GM12878 (cell line): ENCODE measurements at regions of chr12 and their contacts with region 1.

Region 1: DNA sequence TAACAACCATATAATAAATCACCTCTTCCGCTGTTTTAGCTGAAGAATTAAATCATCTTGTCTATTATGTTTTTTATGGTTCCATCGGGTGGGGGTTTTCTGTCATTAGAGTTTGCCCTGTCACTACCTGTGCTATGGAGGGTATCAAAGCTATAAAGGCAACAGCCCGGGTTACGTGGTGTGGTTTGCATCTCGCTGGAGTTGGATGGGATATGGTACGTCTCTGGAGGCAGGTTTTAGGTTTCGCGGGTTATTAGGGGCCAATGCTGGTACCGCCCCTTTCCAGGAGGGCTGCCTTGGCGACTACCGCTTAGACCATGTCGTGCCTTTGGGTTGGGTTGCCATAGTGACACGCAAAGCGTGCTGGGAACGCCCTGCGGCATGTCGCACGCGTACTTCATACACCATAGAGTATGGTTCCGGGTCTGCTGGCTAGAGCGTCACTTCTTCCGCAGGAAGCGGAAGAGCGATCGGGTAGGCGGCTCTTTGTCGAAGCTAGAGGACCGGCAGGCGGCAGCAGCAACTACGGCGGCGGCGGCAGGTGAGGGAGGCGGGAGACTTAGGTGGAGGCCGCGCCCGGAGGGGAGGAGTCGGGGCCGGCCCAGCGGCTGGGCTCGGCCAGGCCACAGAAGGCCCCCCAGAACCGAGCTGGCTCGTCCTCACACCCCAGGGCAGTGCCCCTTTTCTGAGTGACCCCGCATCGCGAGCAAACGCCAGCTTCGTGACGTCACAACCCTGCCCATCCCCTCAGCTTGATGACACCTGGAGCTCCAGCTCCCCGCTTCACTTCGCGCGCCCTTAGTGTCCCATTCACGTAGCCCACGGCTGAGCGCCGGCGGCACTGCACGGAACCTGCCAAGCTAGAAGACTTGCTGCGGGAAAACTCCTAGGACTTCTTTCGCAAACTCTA is at the start of gene ZC3H10:
- DNase-seq: peak; percentile 99
- ATAC-seq: peak; percentile 86
- H3K4me3 ChIP-seq: peak within 1 kb of the TSS; percentile 90
- H3K27ac ChIP-seq: peak within 1 kb of the TSS; percentile 79
- H3K4me1 ChIP-seq: peaks cover 15% of the 10 kb centered on the region
- H3K27me3 ChIP-seq: no peaks in the 10 kb centered on the region
- CTCF ChIP-seq: peak; percentile 40 to 69 (median 48)
- EP300 ChIP-seq: no peak
- POLR2A ChIP-seq: peak; percentile 99
- RAD21 ChIP-seq: no peak
- polyA plus RNA-seq, gene ZC3H10: 0.56 to 0.75 TPM

Region 2: GRCh38 chr12:55280991-55281390 is 837.0 kb before region 1 on chr12:
- CTCF ChIA-PET with region 1: no interaction called
- POLR2A ChIA-PET with region 1: no interaction called
- RAD21 ChIA-PET with region 1: no interaction called
- SMC1A ChIA-PET with region 1: no interaction called
- in situ Hi-C with region 1: no loop called
- intact Hi-C with region 1: no loop called
- DNase-seq: no peak
- ATAC-seq: no peak
- H3K4me3 ChIP-seq: no peak overlapping the region
- H3K27ac ChIP-seq: no peak overlapping the region
- H3K4me1 ChIP-seq: no peaks in the 10 kb centered on the region
- H3K27me3 ChIP-seq: no peaks in the 10 kb centered on the region
- CTCF ChIP-seq: no peak
- EP300 ChIP-seq: no peak
- POLR2A ChIP-seq: no peak
- RAD21 ChIP-seq: no peak

Region 3: DNA sequence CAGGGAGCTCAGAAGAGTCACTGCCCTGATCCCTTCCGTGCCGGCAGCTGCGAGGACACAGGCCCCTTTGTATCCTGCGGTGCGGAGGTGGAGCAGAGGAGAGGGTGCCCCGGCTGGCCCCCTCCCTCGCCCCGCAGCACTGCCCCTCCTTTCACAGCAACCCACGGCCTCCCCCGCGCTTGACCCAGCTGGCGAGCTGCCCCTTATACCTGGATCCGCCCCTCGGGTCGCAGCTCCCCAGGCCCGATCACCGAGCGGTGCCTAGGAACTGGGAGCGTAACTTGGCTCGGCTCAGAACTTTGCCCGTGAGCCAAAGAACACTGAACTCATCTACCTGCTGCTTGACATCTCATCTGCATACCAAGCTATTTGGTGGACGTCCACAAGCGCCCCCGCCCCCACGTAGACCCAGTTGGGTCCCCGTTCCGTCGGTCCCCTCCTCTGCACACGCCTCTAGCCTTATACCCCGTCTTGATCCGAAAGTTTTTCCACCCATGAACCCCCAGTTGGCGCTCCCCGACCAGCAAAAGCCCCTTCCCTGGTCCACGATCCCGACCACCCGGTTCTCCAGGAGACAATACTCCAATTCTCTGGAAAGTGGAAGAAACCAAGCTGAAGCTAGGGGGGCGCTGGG is 287.9 kb before region 1 on chr12:
- CTCF ChIA-PET with region 1: no interaction called
- POLR2A ChIA-PET with region 1: interaction called, 5 read pairs
- RAD21 ChIA-PET with region 1: interaction called, 3 read pairs
- SMC1A ChIA-PET with region 1: no interaction called
- in situ Hi-C with region 1: no loop called
- intact Hi-C with region 1: loop called (anchors 5 kb)
- DNase-seq: no peak
- ATAC-seq: peak; percentile 25
- H3K4me3 ChIP-seq: peak overlapping the region; percentile 96
- H3K27ac ChIP-seq: peak overlapping the region; percentile 76
- H3K4me1 ChIP-seq: peaks cover 21% of the 10 kb centered on the region; the same call in 1 of the 2 replicates
- H3K27me3 ChIP-seq: no peaks in the 10 kb centered on the region
- CTCF ChIP-seq: no peak
- EP300 ChIP-seq: no peak
- POLR2A ChIP-seq: 0 out of 2 replicates have a peak, but pooled peaks have one; percentile 20
- RAD21 ChIP-seq: 0 out of 2 replicates have a peak, but pooled peaks have one; percentile 13

Region 4: DNA sequence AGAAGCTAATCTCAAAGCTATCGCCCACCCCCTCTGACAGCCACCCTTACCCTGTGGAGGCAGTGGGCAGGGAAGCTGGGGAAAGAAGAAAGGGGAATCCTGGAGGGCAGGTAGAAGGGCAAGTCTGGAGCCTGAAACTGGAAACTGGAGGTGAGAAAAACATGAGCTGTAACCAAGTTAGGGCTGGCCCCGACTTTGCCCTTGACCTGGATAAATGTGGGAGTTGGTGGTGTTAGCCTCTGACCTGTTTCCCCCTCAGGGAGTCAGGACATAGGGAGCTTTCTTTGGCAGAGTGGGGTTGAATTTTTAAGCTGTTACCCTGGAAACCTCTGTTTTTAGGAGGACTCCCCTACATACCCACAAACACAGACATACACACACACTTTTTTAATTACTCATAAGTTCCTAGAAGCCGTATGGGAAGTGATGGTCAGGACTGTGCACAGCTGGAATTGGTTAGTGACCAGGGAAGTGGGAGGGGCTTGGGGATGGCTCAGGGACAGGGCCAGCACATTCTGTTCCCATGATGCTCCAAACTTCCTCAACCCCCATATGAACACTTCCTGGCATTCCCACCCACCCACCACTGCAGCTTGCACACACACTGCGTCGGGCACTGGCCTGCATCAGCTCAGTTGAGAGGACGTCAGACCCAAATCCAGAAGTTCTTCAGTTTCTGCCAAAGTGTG is 270.3 kb before region 1 on chr12:
- CTCF ChIA-PET with region 1: no interaction called
- POLR2A ChIA-PET with region 1: no interaction called
- RAD21 ChIA-PET with region 1: no interaction called
- SMC1A ChIA-PET with region 1: no interaction called
- in situ Hi-C with region 1: no loop called
- intact Hi-C with region 1: no loop called
- DNase-seq: no peak
- ATAC-seq: peak; percentile 36
- H3K4me3 ChIP-seq: no peak overlapping the region
- H3K27ac ChIP-seq: no peak overlapping the region
- H3K4me1 ChIP-seq: no peaks in the 10 kb centered on the region; the same call in 1 of the 2 replicates
- H3K27me3 ChIP-seq: peaks cover 0 to 1% of the 10 kb centered on the region in 2 experiments; a peak in 3 of 4 replicates
- CTCF ChIP-seq: no peak
- EP300 ChIP-seq: no peak
- POLR2A ChIP-seq: no peak
- RAD21 ChIP-seq: no peak

Region 5: DNA sequence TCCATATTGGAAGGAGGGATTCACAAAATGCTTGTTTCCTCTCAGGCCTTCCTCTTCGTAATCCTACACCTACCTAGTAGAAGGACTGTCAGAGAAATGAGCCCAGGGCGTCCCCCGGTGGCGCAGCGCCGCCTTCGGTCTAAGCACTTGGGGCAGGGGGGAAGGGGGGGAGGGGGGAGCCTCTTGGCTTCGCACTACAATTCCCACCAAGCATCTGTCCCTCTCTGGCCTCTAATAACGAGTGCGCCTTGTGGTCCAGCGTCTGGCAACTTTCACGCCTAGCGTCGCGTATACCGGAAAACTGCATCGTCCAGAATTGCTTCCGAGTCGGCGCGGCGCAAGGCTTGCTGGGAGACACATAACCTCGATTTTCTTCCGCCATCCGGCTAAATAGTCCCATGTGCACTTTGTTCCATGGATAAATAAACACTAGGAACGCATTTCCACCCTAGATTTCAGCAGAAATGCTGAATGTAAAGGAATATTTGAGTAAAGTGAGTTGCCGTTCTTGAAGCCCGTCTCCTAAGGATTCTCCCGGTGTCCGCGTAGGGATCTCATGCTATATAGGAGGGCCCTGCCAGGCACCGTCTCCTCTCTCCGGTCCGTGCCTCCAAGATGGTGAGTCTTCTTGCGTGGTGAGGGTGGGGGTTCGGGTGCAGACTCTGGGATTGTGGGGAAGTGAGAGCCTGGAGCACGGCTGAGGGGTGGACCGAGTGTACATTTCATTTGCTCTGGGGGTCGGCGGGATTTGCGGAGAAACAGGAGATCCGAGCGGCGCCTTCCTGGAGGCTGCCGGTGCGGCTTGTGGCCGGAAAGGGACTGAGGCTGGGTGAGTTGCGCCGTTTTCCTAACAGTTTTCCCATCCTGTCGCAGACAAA is 76.2 kb before region 1 on chr12 and contains the start of gene RPS26:
- CTCF ChIA-PET with region 1: interaction called, 8 read pairs
- POLR2A ChIA-PET with region 1: interaction called, 4 read pairs
- RAD21 ChIA-PET with region 1: interaction called, 11 read pairs
- SMC1A ChIA-PET with region 1: interaction called, 3 read pairs
- in situ Hi-C with region 1: no loop called
- intact Hi-C with region 1: loop called (anchors 2 kb)
- DNase-seq: peak; percentile 98
- ATAC-seq: peak; percentile 96
- H3K4me3 ChIP-seq: peak within 1 kb of the TSS; percentile 98
- H3K27ac ChIP-seq: peak within 1 kb of the TSS; percentile 98
- H3K4me1 ChIP-seq: peaks cover 13% of the 10 kb centered on the region
- H3K27me3 ChIP-seq: no peaks in the 10 kb centered on the region
- CTCF ChIP-seq: peak; percentile 46 to 64 (median 61)
- EP300 ChIP-seq: peak in 1 of 2 experiments; percentile 60; a peak in 2 of 4 replicates
- POLR2A ChIP-seq: peak; percentile 100
- RAD21 ChIP-seq: peak; percentile 85
- polyA plus RNA-seq, gene RPS26: 2,920 to 3,147 TPM

Region 6: DNA sequence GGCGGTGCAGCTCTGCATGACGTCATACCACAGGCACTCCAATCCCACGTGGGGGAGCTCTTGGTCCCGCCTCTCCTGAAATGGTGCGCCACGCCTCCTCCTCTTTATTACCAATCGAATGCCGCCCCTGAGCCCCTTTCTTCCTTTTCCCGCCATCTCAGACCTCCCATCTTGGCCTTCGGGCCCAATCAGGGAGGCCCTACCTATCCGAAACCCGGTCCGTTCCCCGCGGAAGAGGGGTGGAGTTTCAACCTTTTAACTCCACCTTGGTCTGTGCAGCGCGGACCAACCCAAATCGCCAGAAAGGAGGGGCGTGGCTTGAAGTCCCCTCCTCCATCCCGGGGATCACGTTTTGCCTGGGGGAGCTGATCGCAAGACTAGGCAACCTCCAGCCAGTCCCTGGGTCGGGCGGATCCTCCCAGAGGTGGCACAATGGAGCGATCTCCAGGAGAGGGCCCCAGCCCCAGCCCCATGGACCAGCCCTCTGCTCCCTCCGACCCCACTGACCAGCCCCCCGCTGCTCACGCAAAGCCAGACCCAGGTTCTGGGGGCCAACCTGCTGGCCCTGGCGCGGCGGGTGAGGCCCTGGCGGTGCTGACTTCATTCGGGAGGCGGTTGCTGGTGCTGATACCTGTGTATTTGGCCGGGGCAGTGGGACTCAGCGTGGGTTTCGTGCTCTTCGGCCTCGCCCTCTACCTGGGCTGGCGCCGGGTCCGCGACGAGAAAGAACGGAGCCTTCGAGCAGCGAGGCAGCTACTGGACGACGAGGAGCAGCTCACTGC is 10.0 kb after region 1 on chr12 and contains the start of gene ESYT1:
- CTCF ChIA-PET with region 1: interaction called, 33 read pairs
- POLR2A ChIA-PET with region 1: interaction called, 56 read pairs
- RAD21 ChIA-PET with region 1: interaction called, 17 read pairs
- SMC1A ChIA-PET with region 1: interaction called, 16 read pairs
- in situ Hi-C with region 1: no loop called
- intact Hi-C with region 1: loop called (anchors 1 kb)
- DNase-seq: peak; percentile 98
- ATAC-seq: peak; percentile 93
- H3K4me3 ChIP-seq: peak within 1 kb of the TSS; percentile 93
- H3K27ac ChIP-seq: peak within 1 kb of the TSS; percentile 72
- H3K4me1 ChIP-seq: peaks cover 24% of the 10 kb centered on the region
- H3K27me3 ChIP-seq: no peaks in the 10 kb centered on the region
- CTCF ChIP-seq: no peak
- EP300 ChIP-seq: peak in 1 of 2 experiments; percentile 17; a peak in 1 of 4 replicates
- POLR2A ChIP-seq: peak; percentile 87
- RAD21 ChIP-seq: no peak
- polyA plus RNA-seq, gene ESYT1: 55.6 to 57.9 TPM

Region 7: DNA sequence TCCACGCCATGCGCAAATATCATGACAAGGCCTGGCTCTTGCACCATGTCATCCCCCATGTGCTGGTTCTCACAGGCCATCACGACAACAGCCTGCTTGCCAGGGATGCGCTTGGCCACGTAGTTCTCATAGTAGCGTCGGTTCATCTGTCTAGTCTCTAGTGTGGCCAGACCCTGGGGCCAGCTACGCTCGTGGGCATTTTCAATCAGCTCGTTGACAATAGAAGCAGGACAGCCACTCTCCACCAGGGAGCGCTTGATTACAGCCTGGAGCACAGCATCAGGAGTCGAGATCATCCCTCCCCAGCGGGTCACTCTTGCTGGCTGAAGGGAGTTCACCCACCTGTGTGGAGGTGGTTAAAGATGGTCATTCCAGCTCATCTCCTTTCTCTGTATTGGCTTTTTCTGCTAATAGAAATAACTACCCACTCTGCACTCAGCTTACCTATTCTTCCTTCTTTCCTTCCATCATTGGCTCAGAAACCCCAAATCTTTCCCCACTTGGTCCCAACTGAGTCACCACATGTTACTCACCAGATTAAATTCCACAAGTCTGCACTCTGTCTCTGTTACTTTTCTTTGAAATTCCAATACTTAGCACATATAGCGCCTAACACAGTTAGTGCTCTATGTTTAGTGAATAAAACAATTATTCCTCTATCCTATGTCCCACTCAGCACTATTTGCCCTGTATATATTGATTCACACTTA is 88.6 kb after region 1 on chr12:
- CTCF ChIA-PET with region 1: interaction called, 12 read pairs
- POLR2A ChIA-PET with region 1: interaction called, 5 read pairs
- RAD21 ChIA-PET with region 1: interaction called, 5 read pairs
- SMC1A ChIA-PET with region 1: no interaction called
- in situ Hi-C with region 1: no loop called
- intact Hi-C with region 1: no loop called
- DNase-seq: no peak
- ATAC-seq: peak; percentile 95
- H3K4me3 ChIP-seq: no peak overlapping the region
- H3K27ac ChIP-seq: no peak overlapping the region
- H3K4me1 ChIP-seq: no peaks in the 10 kb centered on the region
- H3K27me3 ChIP-seq: no peaks in the 10 kb centered on the region
- CTCF ChIP-seq: peak; percentile 67 to 79 (median 75)
- EP300 ChIP-seq: no peak
- POLR2A ChIP-seq: no peak; the same call in 1 of the 2 replicates
- RAD21 ChIP-seq: peak; percentile 45

Region 8: GRCh38 chr12:56258057-56258819 is 140.2 kb after region 1 on chr12 and contains the start of gene ANKRD52:
- CTCF ChIA-PET with region 1: interaction called, 7 read pairs
- POLR2A ChIA-PET with region 1: interaction called, 3 read pairs
- RAD21 ChIA-PET with region 1: interaction called, 4 read pairs
- SMC1A ChIA-PET with region 1: no interaction called
- in situ Hi-C with region 1: no loop called
- intact Hi-C with region 1: loop called (anchors 2 kb)
- DNase-seq: no peak
- ATAC-seq: peak; percentile 98
- H3K4me3 ChIP-seq: peak within 1 kb of the TSS; percentile 95
- H3K27ac ChIP-seq: peak within 1 kb of the TSS; percentile 73
- H3K4me1 ChIP-seq: peaks cover 7% of the 10 kb centered on the region
- H3K27me3 ChIP-seq: no peaks in the 10 kb centered on the region
- CTCF ChIP-seq: peak; percentile 54 to 84 (median 57); a peak in 5 of 6 replicates
- EP300 ChIP-seq: 0 out of 4 replicates have a peak, but pooled peaks of 1 of the 2 experiments have one; percentile 12
- POLR2A ChIP-seq: peak; percentile 71
- RAD21 ChIP-seq: no peak
- polyA plus RNA-seq, gene ANKRD52: 0.90 to 1.2 TPM

Region 9: GRCh38 chr12:56461235-56462159 is 343.5 kb after region 1 on chr12:
- CTCF ChIA-PET with region 1: interaction called, 22 read pairs
- POLR2A ChIA-PET with region 1: no interaction called
- RAD21 ChIA-PET with region 1: interaction called, 4 read pairs
- SMC1A ChIA-PET with region 1: interaction called, 5 read pairs
- in situ Hi-C with region 1: loop called (anchors 5 kb)
- intact Hi-C with region 1: no loop called
- DNase-seq: no peak
- ATAC-seq: no peak; the same call in 2 of the 3 replicates
- H3K4me3 ChIP-seq: no peak overlapping the region
- H3K27ac ChIP-seq: no peak overlapping the region
- H3K4me1 ChIP-seq: peaks cover 10% of the 10 kb centered on the region
- H3K27me3 ChIP-seq: no peaks in the 10 kb centered on the region
- CTCF ChIP-seq: no peak
- EP300 ChIP-seq: no peak
- POLR2A ChIP-seq: no peak
- RAD21 ChIP-seq: no peak